B cell (primary cell): ENCODE measurements at regions of chr2 and their contacts with region 1.

Region 1: DNA sequence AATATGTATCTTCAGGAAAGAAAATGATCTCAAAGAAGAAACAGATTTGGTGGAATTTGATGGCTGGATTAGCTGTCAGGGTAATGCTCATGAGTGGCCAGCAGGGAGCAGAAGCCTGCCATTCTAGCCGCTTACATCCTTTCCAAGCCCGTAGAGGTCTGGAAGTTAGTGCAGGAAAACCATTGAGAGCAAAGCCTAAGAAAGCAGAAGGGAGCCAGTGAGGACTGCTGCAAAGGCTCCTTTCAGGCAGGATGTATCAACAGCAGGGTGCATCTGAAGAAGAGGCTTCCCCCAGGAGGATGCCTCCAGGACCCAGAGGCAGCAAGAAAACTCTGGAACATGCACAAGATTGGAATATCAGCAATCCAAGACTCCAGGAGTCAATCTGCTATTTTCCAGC is 22.9 kb upstream of the LBH start:
- DNase-seq: peak; percentile 67
- ATAC-seq: peak; percentile 62
- H3K4me3 ChIP-seq: no peak overlapping the region
- H3K4me3 Mint-ChIP-seq: no peak overlapping the region
- H3K27ac ChIP-seq: no peak overlapping the region
- H3K27ac Mint-ChIP-seq: peak overlapping the region; percentile 22
- H3K4me1 ChIP-seq: peaks cover 9 to 18% of the 10 kb centered on the region in 2 donors
- H3K4me1 Mint-ChIP-seq: peaks cover 16% of the 10 kb centered on the region
- H3K27me3 ChIP-seq: no peaks in the 10 kb centered on the region
- H3K27me3 Mint-ChIP-seq: no peaks in the 10 kb centered on the region
- CTCF ChIP-seq: peak; percentile 88

Region 2: GRCh38 chr2:29475499-29475898 is 733.0 kb before region 1 on chr2:
- CTCF ChIA-PET with region 1: no interaction called
- POLR2A ChIA-PET with region 1: no interaction called
- intact Hi-C with region 1: no loop called
- DNase-seq: no peak
- ATAC-seq: no peak
- H3K4me3 ChIP-seq: no peak overlapping the region
- H3K4me3 Mint-ChIP-seq: no peak overlapping the region
- H3K27ac ChIP-seq: no peak overlapping the region
- H3K27ac Mint-ChIP-seq: no peak overlapping the region
- H3K4me1 ChIP-seq: no peaks in the 10 kb centered on the region
- H3K4me1 Mint-ChIP-seq: no peaks in the 10 kb centered on the region
- H3K27me3 ChIP-seq: no peaks in the 10 kb centered on the region
- H3K27me3 Mint-ChIP-seq: peaks cover 2% of the 10 kb centered on the region
- CTCF ChIP-seq: no peak

Region 3: GRCh38 chr2:30022444-30023071 is 185.9 kb before region 1 on chr2:
- CTCF ChIA-PET with region 1: no interaction called
- POLR2A ChIA-PET with region 1: no interaction called
- intact Hi-C with region 1: no loop called
- DNase-seq: no peak
- ATAC-seq: no peak
- H3K4me3 ChIP-seq: no peak overlapping the region
- H3K4me3 Mint-ChIP-seq: no peak overlapping the region
- H3K27ac ChIP-seq: no peak overlapping the region
- H3K27ac Mint-ChIP-seq: no peak overlapping the region
- H3K4me1 ChIP-seq: peaks cover 0 to 13% of the 10 kb centered on the region in 2 donors
- H3K4me1 Mint-ChIP-seq: no peaks in the 10 kb centered on the region
- H3K27me3 ChIP-seq: peaks cover 0 to 7% (median 0%) of the 10 kb centered on the region in 4 experiments
- H3K27me3 Mint-ChIP-seq: peaks cover 7% of the 10 kb centered on the region
- CTCF ChIP-seq: no peak

Region 4: GRCh38 chr2:30225131-30225762 is 16.8 kb after region 1 on chr2:
- CTCF ChIA-PET with region 1: interaction called, 134 read pairs
- POLR2A ChIA-PET with region 1: interaction called, 4 read pairs
- intact Hi-C with region 1: loop called (anchors 2 kb)
- DNase-seq: peak; percentile 74
- ATAC-seq: peak; percentile 68
- H3K4me3 ChIP-seq: peak overlapping the region; percentile 42 to 66 (median 64)
- H3K4me3 Mint-ChIP-seq: peak overlapping the region; percentile 95
- H3K27ac ChIP-seq: peak overlapping the region; percentile 88 to 91
- H3K27ac Mint-ChIP-seq: peak overlapping the region; percentile 100
- H3K4me1 ChIP-seq: peaks cover 41 to 53% of the 10 kb centered on the region in 2 donors
- H3K4me1 Mint-ChIP-seq: peaks cover 50% of the 10 kb centered on the region
- H3K27me3 ChIP-seq: no peaks in the 10 kb centered on the region
- H3K27me3 Mint-ChIP-seq: no peaks in the 10 kb centered on the region
- CTCF ChIP-seq: no peak

Region 5: DNA sequence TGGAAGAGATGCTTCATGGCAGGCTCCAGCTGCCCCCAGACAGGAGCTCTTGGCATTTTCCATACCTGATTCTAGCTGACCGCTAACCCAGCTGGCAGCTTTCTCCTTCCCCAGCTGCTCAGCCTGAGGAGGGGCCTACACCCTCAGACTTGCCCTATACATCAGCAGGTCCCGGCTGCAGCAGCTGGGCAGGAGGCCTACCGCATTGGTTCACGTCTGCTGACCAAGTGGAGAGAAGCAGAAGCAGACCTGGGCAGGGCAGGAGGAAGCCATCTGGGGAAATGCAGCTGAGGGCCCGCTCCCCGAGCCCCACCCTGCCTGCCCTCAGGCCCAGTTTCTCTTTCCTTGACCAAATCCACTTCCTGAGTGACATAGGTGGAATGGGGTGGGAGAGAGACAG is 73.6 kb after region 1 on chr2:
- CTCF ChIA-PET with region 1: interaction called, 18 read pairs
- POLR2A ChIA-PET with region 1: no interaction called
- intact Hi-C with region 1: no loop called
- DNase-seq: peak; percentile 89
- ATAC-seq: peak; percentile 98
- H3K4me3 ChIP-seq: peak overlapping the region in 2 of 5 experiments; percentile 11 to 40
- H3K4me3 Mint-ChIP-seq: peak overlapping the region; percentile 66
- H3K27ac ChIP-seq: peak overlapping the region; percentile 75 to 88
- H3K27ac Mint-ChIP-seq: peak overlapping the region; percentile 92
- H3K4me1 ChIP-seq: peaks cover 89 to 94% of the 10 kb centered on the region in 2 donors
- H3K4me1 Mint-ChIP-seq: peaks cover 91% of the 10 kb centered on the region
- H3K27me3 ChIP-seq: no peaks in the 10 kb centered on the region
- H3K27me3 Mint-ChIP-seq: no peaks in the 10 kb centered on the region
- CTCF ChIP-seq: no peak

Region 6: DNA sequence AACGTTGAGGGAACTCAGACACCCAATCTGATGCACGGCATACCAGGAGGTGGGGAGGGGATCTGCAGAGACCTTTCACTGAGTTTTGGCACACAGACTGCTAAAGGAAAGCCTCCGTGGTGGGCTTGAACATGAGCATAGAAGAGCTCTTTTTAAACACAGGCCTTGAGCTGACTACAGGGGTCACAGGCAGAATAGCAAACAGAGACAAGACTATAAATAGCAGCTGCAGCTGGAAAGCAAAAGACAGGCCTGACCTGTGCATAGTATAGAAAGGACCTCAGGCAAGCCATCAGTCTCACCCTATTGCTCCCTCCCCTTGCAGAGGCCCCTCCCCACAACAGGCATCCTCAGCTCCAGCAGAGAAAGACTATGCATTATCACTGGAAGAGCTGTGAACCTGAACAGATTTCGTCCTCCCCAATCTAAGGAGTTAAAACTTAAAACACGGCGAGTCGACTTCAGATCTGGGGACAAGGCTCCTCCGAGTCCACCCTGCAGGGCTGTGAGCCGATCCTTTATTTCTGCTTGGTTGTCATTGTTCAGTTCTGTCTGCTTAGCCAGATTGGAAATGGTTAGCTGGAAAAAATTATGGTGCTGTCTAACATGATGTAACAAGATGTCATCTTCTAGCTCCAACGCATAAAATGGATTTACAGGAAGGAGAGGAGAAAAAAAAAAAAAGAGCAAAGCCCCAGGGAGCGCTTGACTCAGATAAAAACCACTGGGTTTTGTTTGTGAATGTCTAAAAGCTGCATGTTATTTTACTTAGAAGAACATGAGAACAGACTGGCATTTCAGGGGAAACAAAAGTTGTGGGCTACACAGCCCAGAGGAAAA is 213.4 kb after region 1 on chr2:
- CTCF ChIA-PET with region 1: interaction called, 11 read pairs
- POLR2A ChIA-PET with region 1: no interaction called
- intact Hi-C with region 1: no loop called
- DNase-seq: peak; percentile 19
- ATAC-seq: peak; percentile 59
- H3K4me3 ChIP-seq: peak overlapping the region in 1 of 5 experiments; percentile 41
- H3K4me3 Mint-ChIP-seq: peak overlapping the region; percentile 64
- H3K27ac ChIP-seq: peak overlapping the region; percentile 64 to 81
- H3K27ac Mint-ChIP-seq: peak overlapping the region; percentile 82
- H3K4me1 ChIP-seq: peaks cover 28 to 32% of the 10 kb centered on the region in 2 donors
- H3K4me1 Mint-ChIP-seq: peaks cover 31% of the 10 kb centered on the region
- H3K27me3 ChIP-seq: no peaks in the 10 kb centered on the region
- H3K27me3 Mint-ChIP-seq: no peaks in the 10 kb centered on the region
- CTCF ChIP-seq: no peak

Region 7: GRCh38 chr2:30475542-30475941 is 267.1 kb after region 1 on chr2:
- CTCF ChIA-PET with region 1: interaction called, 77 read pairs
- POLR2A ChIA-PET with region 1: no interaction called
- intact Hi-C with region 1: loop called (anchors 1 kb)
- DNase-seq: no peak
- ATAC-seq: no peak
- H3K4me3 ChIP-seq: no peak overlapping the region
- H3K4me3 Mint-ChIP-seq: no peak overlapping the region
- H3K27ac ChIP-seq: no peak overlapping the region
- H3K27ac Mint-ChIP-seq: no peak overlapping the region
- H3K4me1 ChIP-seq: peaks cover 8 to 17% of the 10 kb centered on the region in 2 donors
- H3K4me1 Mint-ChIP-seq: peaks cover 38% of the 10 kb centered on the region
- H3K27me3 ChIP-seq: no peaks in the 10 kb centered on the region
- H3K27me3 Mint-ChIP-seq: no peaks in the 10 kb centered on the region
- CTCF ChIP-seq: no peak

Region 8: DNA sequence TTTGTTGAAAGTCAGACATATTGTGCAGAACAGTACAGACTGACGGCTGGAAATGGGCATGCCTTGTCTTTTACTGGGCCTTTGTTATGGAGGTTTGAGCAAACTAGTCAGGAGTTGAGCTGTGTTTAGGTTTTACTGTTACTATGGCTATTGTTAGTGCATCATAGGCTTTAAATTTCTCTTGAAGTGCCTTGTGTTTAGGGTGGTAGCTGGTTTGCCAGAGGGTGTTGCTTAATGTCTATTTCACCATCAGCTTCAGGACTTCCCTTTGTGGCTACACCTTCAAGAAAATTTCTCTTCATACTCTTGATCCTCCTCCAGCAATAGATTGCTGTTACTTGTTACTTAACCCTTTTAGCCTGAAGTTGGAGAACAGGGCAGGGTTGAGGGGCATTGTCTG is 494.2 kb after region 1 on chr2:
- CTCF ChIA-PET with region 1: interaction called, 344 read pairs
- POLR2A ChIA-PET with region 1: interaction called, 15 read pairs
- intact Hi-C with region 1: loop called (anchors 1 kb)
- DNase-seq: no peak
- ATAC-seq: no peak
- H3K4me3 ChIP-seq: no peak overlapping the region
- H3K4me3 Mint-ChIP-seq: no peak overlapping the region
- H3K27ac ChIP-seq: no peak overlapping the region
- H3K27ac Mint-ChIP-seq: no peak overlapping the region
- H3K4me1 ChIP-seq: peaks cover 0 to 5% of the 10 kb centered on the region in 2 donors
- H3K4me1 Mint-ChIP-seq: peaks cover 4% of the 10 kb centered on the region
- H3K27me3 ChIP-seq: no peaks in the 10 kb centered on the region
- H3K27me3 Mint-ChIP-seq: no peaks in the 10 kb centered on the region
- CTCF ChIP-seq: no peak